ENCODE measurements at regions of chr2 and their contacts with region 1.

Region 1: DNA sequence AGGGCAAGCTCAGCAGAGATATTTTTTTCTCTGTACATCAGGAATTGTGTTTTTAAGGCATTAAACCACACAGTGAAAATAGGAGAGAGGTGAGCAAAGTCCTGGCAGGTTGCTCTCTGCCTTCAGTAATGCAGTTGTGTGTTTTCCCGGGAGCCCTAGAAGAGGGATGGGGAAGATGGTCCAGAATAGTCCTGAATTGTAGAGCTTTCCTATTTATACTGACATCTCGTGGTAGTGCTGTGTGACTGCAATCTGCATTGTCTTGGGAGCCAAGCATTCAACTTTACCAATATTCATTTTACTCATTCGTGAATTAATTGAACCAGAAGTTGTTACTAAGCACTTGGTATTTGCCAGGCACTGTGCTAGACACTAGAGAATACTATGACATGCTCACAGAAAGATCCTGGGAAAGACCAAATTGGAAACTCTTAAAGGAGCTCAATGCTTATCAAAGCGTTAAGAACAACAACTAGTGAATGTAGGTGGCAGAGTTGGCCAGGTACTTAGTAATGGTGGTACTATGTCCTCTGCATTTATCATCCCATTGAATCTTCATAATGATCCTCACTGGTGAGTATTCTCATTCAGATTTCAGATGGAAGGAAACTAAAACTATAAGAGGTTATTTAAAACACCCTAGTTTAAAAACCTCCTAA is 214.6 kb downstream of the TRIB2 start:
- DNase-seq: peak in 1 of 5 donors; percentile 66
- H3K4me3 ChIP-seq: no peak overlapping the region
- H3K27ac ChIP-seq: no peak overlapping the region
- H3K4me1 ChIP-seq: peaks cover 0 to 2% (median 0%) of the 10 kb centered on the region in 3 donors
- H3K27me3 ChIP-seq: no peaks in the 10 kb centered on the region
- CTCF ChIP-seq: peak; percentile 84

Region 2: GRCh38 chr2:12424809-12425208 is 506.5 kb before region 1 on chr2:
- intact Hi-C with region 1: no loop called
- DNase-seq: no peak
- H3K4me3 ChIP-seq: no peak overlapping the region
- H3K27ac ChIP-seq: no peak overlapping the region
- H3K4me1 ChIP-seq: no peaks in the 10 kb centered on the region
- H3K27me3 ChIP-seq: no peaks in the 10 kb centered on the region
- CTCF ChIP-seq: no peak

Region 3: GRCh38 chr2:13006829-13007717 is 75.8 kb after region 1 on chr2:
- intact Hi-C with region 1: loop called (anchors 10 kb)
- DNase-seq: peak in 4 of 5 donors; percentile 86 to 93 (median 88)
- H3K4me3 ChIP-seq: peak overlapping the region; percentile 28 to 49 (median 28)
- H3K27ac ChIP-seq: peak overlapping the region in 1 of 2 donors; percentile 19
- H3K4me1 ChIP-seq: peaks cover 0 to 4% (median 4%) of the 10 kb centered on the region in 3 donors
- H3K27me3 ChIP-seq: no peaks in the 10 kb centered on the region
- CTCF ChIP-seq: peak; percentile 83

Measured in kidney (tissue), 22 donors.